ENCODE measurements at regions of chr7 and their contacts with region 1.

Region 1: DNA sequence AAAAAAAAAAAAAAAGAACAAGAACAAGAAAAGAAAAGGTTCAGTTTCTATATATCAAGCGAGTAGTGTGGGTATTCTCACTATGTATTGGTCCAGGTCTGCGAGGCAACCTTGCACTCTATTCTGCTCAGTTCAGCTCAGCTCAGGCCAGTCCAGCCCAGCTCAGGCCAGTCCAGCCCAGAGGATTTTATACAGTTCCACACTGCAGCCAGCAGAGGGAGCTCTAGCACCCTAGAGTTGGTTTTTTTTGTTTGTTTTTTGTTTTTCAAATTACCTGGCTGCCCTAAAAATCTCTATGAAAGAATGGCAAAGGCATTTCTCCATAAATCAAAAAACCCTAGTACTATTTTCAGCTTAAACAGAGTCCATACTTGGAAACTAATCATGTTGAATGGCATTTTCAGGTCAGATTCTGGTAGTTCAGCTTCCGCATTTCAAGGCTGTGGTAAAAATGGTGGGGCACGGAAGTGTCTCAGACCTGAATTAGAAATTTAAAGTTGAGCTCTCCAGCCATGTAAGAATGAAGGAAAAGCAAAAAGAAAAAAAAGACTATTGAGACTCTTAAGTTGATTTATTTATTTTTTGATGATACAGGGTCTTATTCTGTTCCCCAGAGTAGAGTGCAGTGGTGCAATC is 55.2 kb upstream of the GSDME start:
- DNase-seq: peak; percentile 40 to 64
- ATAC-seq: peak; percentile 79 to 93 (median 90)
- H3K4me3 ChIP-seq: no peak overlapping the region
- H3K27ac ChIP-seq: no peak overlapping the region
- H3K4me1 ChIP-seq: no peaks in the 10 kb centered on the region
- H3K27me3 ChIP-seq: no peaks in the 10 kb centered on the region
- CTCF ChIP-seq: peak; percentile 87

Region 2: DNA sequence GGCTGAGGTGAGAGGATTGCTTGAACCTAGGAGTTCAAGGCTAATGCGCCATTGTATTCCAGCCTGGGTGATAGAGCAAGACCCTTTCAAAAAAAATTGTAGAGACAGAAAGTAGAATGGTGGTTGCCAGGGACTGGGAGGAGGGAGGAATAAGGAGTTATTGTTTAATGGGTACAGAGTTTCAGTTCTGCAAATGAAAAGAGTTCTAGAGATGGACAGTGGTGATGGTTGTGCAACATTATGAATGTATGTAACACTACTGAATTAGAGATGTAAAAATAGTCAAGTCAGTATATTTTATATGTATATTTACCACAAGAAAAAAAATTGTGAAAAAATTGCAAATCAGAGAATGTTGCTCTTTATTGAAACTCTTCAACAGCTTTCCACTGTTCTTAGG is 794.9 kb before region 1 on chr7:
- intact Hi-C with region 1: no loop called
- DNase-seq: no peak
- ATAC-seq: no peak
- H3K4me3 ChIP-seq: no peak overlapping the region
- H3K27ac ChIP-seq: no peak overlapping the region
- H3K4me1 ChIP-seq: no peaks in the 10 kb centered on the region
- H3K27me3 ChIP-seq: no peaks in the 10 kb centered on the region
- CTCF ChIP-seq: no peak

Region 3: DNA sequence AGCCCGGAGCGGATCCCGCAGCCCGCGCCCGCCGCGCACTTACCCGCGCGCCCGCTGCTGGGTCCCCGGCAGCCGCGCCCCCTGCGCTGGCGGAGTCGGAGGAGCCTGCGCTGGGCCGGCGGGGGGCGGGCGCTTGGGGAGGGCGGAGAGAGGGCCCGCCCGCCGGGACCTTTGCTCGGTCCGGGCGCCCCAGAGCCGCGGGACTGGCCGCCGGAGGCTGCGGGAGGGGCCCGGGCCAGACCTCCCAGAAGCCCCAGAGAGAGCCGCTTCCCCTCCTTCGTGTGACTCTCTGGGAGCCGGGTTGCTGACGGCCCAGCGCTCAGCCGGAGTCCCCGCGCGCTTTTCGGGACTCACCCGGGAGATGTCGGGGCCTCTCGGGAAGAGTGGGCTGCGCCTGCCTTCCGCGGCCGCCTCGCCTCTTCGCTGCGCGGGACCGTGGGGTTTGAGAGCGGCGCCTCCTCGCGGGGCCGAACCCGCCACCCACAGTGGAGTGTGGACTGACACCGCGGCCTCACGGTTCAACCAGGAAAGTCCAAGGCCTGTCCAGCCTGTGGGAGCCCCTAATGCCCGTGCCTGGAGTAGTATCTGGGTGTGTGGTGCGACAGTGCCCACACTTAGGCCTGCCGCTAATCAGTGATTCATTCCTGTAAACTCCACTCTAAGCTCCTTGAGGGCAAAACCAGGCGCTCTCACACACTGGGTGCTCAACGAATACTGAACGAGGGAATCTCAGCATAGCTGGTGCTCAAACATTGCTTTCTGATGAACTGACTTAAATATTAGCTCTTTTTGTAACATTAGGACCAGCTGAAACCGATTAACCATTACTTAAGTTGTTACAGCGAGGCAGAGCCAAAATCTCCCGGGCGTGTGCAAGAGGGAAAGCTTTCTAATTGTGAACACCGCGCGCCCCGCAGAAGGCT is 54.8 kb before region 1 on chr7 and contains the start of gene GSDME:
- intact Hi-C with region 1: no loop called
- DNase-seq: peak; percentile 77 to 81
- ATAC-seq: peak; percentile 84 to 85 (median 84)
- H3K4me3 ChIP-seq: peak within 1 kb of the TSS; percentile 90
- H3K27ac ChIP-seq: peak within 1 kb of the TSS; percentile 92
- H3K4me1 ChIP-seq: peaks cover 27% of the 10 kb centered on the region
- H3K27me3 ChIP-seq: no peaks in the 10 kb centered on the region
- CTCF ChIP-seq: no peak
- total RNA-seq, gene GSDME: 10.9 to 32.1 (median 16.0) TPM

Region 4: GRCh38 chr7:25069900-25070443 is 257.5 kb after region 1 on chr7:
- intact Hi-C with region 1: loop called in 1 of 2 experiments (anchors 2 kb)
- DNase-seq: peak; percentile 33 to 66
- ATAC-seq: peak; percentile 48 to 88 (median 59)
- H3K4me3 ChIP-seq: peak overlapping the region; percentile 65
- H3K27ac ChIP-seq: no peak overlapping the region
- H3K4me1 ChIP-seq: no peaks in the 10 kb centered on the region
- H3K27me3 ChIP-seq: no peaks in the 10 kb centered on the region
- CTCF ChIP-seq: peak; percentile 94

Region 5: GRCh38 chr7:25093268-25093826 is 280.9 kb after region 1 on chr7:
- intact Hi-C with region 1: loop called (anchors 5 kb)
- DNase-seq: peak; percentile 71 to 73
- ATAC-seq: peak; percentile 49 to 85 (median 82)
- H3K4me3 ChIP-seq: no peak overlapping the region
- H3K27ac ChIP-seq: no peak overlapping the region
- H3K4me1 ChIP-seq: no peaks in the 10 kb centered on the region
- H3K27me3 ChIP-seq: no peaks in the 10 kb centered on the region
- CTCF ChIP-seq: peak; percentile 55

Region 6: GRCh38 chr7:25098096-25099046 is 285.9 kb after region 1 on chr7:
- intact Hi-C with region 1: loop called (anchors 5 kb)
- DNase-seq: peak in 1 of 2 donors; percentile 25
- ATAC-seq: peak; percentile 58 to 77 (median 76)
- H3K4me3 ChIP-seq: no peak overlapping the region
- H3K27ac ChIP-seq: no peak overlapping the region
- H3K4me1 ChIP-seq: no peaks in the 10 kb centered on the region
- H3K27me3 ChIP-seq: peaks cover 0 to 3% (median 0%) of the 10 kb centered on the region in 3 donors
- CTCF ChIP-seq: peak; percentile 84

Region 7: GRCh38 chr7:25598765-25599164 is 786.3 kb after region 1 on chr7:
- intact Hi-C with region 1: no loop called
- DNase-seq: no peak
- ATAC-seq: no peak
- H3K4me3 ChIP-seq: no peak overlapping the region
- H3K27ac ChIP-seq: no peak overlapping the region
- H3K4me1 ChIP-seq: peaks cover 6% of the 10 kb centered on the region
- H3K27me3 ChIP-seq: no peaks in the 10 kb centered on the region
- CTCF ChIP-seq: no peak